ENCODE measurements at regions of chr14 and their contacts with region 1.

Region 1: GRCh38 chr14:60184146-60184904 is 19.1 kb upstream of the DHRS7 start:
- DNase-seq: no peak
- H3K4me3 ChIP-seq: peak overlapping the region; percentile 4 to 43 (median 38)
- H3K27ac ChIP-seq: peak overlapping the region; percentile 28 to 58 (median 48)
- H3K4me1 ChIP-seq: peaks cover 0 to 28% (median 11%) of the 10 kb centered on the region in 4 donors
- H3K27me3 ChIP-seq: no peaks in the 10 kb centered on the region
- CTCF ChIP-seq: peak; percentile 44 to 80 (median 72)
- EP300 ChIP-seq: no peak
- POLR2A ChIP-seq: no peak

Region 2: DNA sequence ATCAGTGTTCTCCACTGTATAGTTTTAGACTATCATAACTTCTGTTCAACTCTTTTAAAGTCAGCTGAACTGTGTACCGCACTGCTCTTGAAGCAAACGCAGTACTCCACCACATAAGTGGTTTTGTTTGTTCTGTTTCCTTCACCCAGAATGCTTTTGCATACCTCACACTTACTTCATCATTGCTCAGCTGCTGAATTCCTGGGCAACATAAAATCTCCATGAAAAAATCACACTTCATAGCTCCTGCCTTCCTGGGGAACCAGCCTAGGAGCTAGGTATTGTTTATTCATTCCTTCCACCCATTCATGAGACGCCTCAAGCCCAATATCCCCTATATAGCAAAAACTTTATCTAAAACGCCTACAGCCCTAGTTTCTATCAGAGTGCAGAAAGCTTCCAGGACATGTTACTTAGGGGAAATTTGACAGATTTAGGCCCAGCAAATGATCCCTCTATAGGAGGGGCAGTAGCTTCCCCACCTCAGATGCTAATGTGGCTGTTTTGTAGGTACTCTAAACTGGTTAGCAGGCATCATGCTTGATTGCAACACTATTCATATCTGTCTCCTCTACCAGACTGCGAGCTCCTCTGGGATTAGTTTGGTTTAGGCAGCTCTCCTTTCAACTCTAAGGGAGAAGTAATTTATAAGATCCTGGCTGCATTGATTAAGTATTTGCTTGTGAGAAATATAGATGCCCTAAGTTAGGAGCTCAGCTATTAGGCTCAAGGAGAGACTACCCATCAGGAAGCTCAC is 219.9 kb before region 1 on chr14:
- intact Hi-C with region 1: loop called (anchors 1 kb)
- DNase-seq: no peak
- H3K4me3 ChIP-seq: no peak overlapping the region
- H3K27ac ChIP-seq: no peak overlapping the region
- H3K4me1 ChIP-seq: no peaks in the 10 kb centered on the region
- H3K27me3 ChIP-seq: no peaks in the 10 kb centered on the region
- CTCF ChIP-seq: no peak
- EP300 ChIP-seq: no peak
- POLR2A ChIP-seq: no peak

Region 3: DNA sequence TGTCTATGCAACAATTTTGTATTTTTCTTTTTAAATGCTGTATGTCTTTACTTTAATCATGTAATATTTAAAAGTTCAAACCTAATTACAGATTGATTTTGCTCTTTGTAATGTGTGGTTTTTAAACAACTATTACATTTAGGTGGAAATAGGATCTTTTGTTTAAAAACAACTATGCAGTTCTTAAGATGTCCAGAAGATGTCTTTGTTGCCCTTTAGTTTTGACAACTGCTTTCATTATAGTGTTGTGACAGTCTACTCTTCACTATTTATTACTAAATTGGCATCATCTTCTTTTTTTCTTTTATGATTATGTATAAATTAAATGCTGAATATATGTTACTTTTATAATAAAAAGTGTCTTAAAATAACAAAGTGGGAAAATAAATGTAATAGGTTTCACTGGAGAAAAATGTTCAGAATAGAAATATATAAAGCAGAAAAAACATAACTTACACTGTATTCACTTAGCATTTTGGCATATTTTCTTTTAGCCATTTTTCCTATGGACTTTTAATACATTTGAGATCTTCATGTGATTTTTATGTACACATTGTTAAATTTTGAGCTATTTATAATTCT is 119.7 kb before region 1 on chr14:
- intact Hi-C with region 1: loop called (anchors 2 kb)
- DNase-seq: no peak
- H3K4me3 ChIP-seq: no peak overlapping the region
- H3K27ac ChIP-seq: no peak overlapping the region
- H3K4me1 ChIP-seq: no peaks in the 10 kb centered on the region
- H3K27me3 ChIP-seq: no peaks in the 10 kb centered on the region
- CTCF ChIP-seq: peak in 3 of 4 experiments; percentile 33 to 54 (median 51)
- EP300 ChIP-seq: no peak
- POLR2A ChIP-seq: no peak

Region 4: GRCh38 chr14:60561845-60562746 is 377.8 kb after region 1 on chr14:
- intact Hi-C with region 1: loop called (anchors 5 kb)
- DNase-seq: peak; percentile 67
- H3K4me3 ChIP-seq: no peak overlapping the region
- H3K27ac ChIP-seq: no peak overlapping the region
- H3K4me1 ChIP-seq: peaks cover 0 to 5% (median 0%) of the 10 kb centered on the region in 4 donors
- H3K27me3 ChIP-seq: no peaks in the 10 kb centered on the region
- CTCF ChIP-seq: peak; percentile 19 to 50 (median 32)
- EP300 ChIP-seq: no peak
- POLR2A ChIP-seq: no peak